ENCODE measurements at regions of chr4 and their contacts with region 1.

Region 1: DNA sequence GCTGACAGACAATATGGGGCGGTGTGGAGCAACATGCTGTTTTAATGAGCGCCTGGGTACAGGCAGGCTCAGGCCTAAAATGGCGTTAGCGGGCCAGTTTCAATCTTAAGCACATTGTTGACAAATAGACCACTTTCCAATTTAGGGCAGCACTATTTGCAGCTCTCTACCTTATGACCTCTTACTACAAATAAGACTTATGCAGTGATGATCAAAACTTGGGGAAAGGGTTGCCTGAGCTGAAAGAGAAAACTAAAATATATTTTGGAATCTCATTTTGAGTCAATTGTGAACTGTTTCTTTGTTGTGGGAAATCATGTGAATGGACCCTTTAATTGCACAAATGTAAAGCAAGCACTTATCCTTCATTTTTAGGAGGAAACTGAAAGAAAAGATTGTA is 25.5 kb upstream of the GPAT3 start:
- DNase-seq: no peak
- H3K4me3 ChIP-seq: no peak overlapping the region
- H3K27ac ChIP-seq: no peak overlapping the region
- H3K4me1 ChIP-seq: no peaks in the 10 kb centered on the region
- H3K27me3 ChIP-seq: no peaks in the 10 kb centered on the region

Region 2: GRCh38 chr4:83498187-83498586 is 12.3 kb before region 1 on chr4:
- CTCF ChIA-PET with region 1: interaction called, 31 read pairs
- POLR2A ChIA-PET with region 1: no interaction called
- DNase-seq: no peak
- H3K4me3 ChIP-seq: no peak overlapping the region
- H3K27ac ChIP-seq: no peak overlapping the region
- H3K4me1 ChIP-seq: no peaks in the 10 kb centered on the region
- H3K27me3 ChIP-seq: no peaks in the 10 kb centered on the region

Region 3: GRCh38 chr4:83582289-83582769 is 71.9 kb after region 1 on chr4:
- CTCF ChIA-PET with region 1: interaction called, 14 read pairs
- POLR2A ChIA-PET with region 1: no interaction called
- DNase-seq: peak; percentile 39 to 61 (median 60)
- H3K4me3 ChIP-seq: peak overlapping the region in 1 of 7 experiments; percentile 5
- H3K27ac ChIP-seq: peak overlapping the region in 1 of 2 experiments; percentile 9
- H3K4me1 ChIP-seq: peaks cover 0 to 3% (median under 1%) of the 10 kb centered on the region in 4 experiments
- H3K27me3 ChIP-seq: no peaks in the 10 kb centered on the region

Region 4: DNA sequence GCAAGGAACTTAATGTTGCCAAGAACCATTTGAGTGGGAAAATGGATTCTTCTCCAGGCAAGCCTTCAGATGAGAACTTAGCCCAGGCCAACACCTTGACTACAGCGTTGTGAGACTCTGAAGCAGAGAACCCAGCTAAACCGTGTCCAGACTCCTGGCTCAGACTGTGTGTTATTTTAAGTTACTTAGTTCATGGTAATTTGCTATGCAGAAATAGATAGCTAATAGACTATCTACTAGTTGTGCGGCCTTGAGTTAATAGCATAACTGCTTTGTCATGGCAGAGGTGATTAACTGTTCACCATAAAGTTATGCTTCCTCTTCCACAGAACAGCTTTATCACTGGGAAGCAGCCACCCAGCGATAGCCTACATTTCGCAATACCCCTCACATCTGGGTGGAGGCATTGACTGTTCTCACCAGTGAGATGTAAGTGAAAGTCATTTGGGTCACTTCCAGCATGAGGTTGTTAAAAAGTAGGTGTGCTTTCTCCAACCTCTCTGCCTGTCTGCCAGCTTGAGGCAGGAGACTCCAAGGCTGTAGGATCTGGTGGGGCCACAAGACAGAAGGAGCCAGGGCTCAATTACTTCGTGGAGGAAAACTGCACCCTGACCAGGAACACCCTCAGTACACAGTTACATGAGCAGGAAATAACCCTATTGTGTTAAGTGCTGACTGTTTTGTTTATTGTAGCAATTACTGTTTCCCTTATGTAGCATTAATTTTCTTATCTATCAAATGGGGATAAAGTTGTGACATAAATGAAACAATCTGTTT is 119.7 kb after region 1 on chr4:
- CTCF ChIA-PET with region 1: interaction called, 31 read pairs
- POLR2A ChIA-PET with region 1: no interaction called
- DNase-seq: peak; percentile 98 to 100 (median 99)
- H3K4me3 ChIP-seq: peak overlapping the region in 1 of 7 experiments; percentile 17
- H3K27ac ChIP-seq: peak overlapping the region in 1 of 2 experiments; percentile 60
- H3K4me1 ChIP-seq: peaks cover 10 to 29% (median 18%) of the 10 kb centered on the region in 4 experiments
- H3K27me3 ChIP-seq: no peaks in the 10 kb centered on the region

Region 5: GRCh38 chr4:83885256-83886182 is 375.1 kb after region 1 on chr4:
- CTCF ChIA-PET with region 1: no interaction called
- POLR2A ChIA-PET with region 1: no interaction called
- DNase-seq: no peak
- H3K4me3 ChIP-seq: no peak overlapping the region
- H3K27ac ChIP-seq: no peak overlapping the region
- H3K4me1 ChIP-seq: no peaks in the 10 kb centered on the region
- H3K27me3 ChIP-seq: no peaks in the 10 kb centered on the region

Measured in common myeloid progenitor, CD34-positive (primary cell).